ENCODE measurements at regions of chr1 and their contacts with region 1.

Region 1: GRCh38 chr1:156480411-156481192 is 20.0 kb downstream of the MEF2D start:
- DNase-seq: peak; percentile 58 to 87 (median 76)
- ATAC-seq: peak; percentile 80 to 87 (median 85)
- H3K4me3 ChIP-seq: no peak overlapping the region
- H3K4me3 Mint-ChIP-seq: peak overlapping the region in 1 of 3 donors; percentile 45
- H3K27ac ChIP-seq: peak overlapping the region; percentile 39
- H3K27ac Mint-ChIP-seq: peak overlapping the region; percentile 64 to 77
- H3K4me1 ChIP-seq: peaks cover 2 to 54% of the 10 kb centered on the region in 2 experiments
- H3K4me1 Mint-ChIP-seq: peaks cover 45 to 52% (median 51%) of the 10 kb centered on the region in 3 donors
- H3K27me3 ChIP-seq: no peaks in the 10 kb centered on the region
- H3K27me3 Mint-ChIP-seq: no peaks in the 10 kb centered on the region

Region 2: GRCh38 chr1:156025877-156026276 is 454.7 kb before region 1 on chr1:
- CTCF ChIA-PET with region 1: no interaction called
- POLR2A ChIA-PET with region 1: no interaction called
- DNase-seq: peak in 25 of 35 experiments; percentile 1 to 56 (median 21)
- ATAC-seq: peak; percentile 64 to 79 (median 76)
- H3K4me3 ChIP-seq: no peak overlapping the region
- H3K4me3 Mint-ChIP-seq: no peak overlapping the region
- H3K27ac ChIP-seq: no peak overlapping the region
- H3K27ac Mint-ChIP-seq: peak overlapping the region in 1 of 2 donors; percentile 10
- H3K4me1 ChIP-seq: peaks cover 2 to 8% of the 10 kb centered on the region in 2 experiments
- H3K4me1 Mint-ChIP-seq: peaks cover 5 to 18% (median 8%) of the 10 kb centered on the region in 3 donors
- H3K27me3 ChIP-seq: peaks cover 0 to 5% of the 10 kb centered on the region in 2 experiments
- H3K27me3 Mint-ChIP-seq: peaks cover 0 to 5% of the 10 kb centered on the region in 2 donors

Region 3: DNA sequence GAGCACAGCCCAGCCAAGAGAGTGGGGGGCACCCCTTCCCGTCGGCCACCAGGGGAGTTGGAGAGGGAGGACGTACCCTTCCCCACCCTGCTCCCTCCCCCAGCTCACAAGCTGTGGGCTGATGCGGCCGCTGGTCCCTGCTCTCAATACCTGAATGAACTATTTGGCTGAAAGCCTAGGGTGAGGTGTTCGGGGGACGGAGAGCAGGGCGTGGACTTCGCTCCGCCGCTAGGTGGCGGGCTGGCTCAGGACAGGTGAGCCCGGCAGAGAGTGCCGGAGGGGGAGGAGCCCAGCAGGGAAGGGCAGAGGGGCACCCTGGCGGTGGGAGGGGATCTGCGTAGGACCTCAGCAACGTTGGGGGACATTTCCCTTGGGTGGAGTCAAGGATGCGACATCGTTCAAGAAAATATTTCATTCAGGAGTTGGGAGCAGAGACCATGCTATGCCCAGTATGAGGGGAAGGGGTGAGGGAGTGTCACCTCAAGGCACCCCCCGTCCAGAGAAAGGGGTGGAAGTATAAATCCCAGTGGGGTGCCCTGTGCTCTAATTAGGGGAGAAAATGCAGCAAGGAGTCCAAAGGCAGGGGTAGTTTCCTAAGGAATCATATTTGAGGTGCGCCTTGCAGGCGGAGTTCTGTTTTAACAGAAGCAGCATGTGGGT is 123.6 kb before region 1 on chr1:
- CTCF ChIA-PET with region 1: no interaction called
- POLR2A ChIA-PET with region 1: no interaction called
- DNase-seq: peak; percentile 12 to 76 (median 55)
- ATAC-seq: peak; percentile 93 to 98 (median 98)
- H3K4me3 ChIP-seq: no peak overlapping the region
- H3K4me3 Mint-ChIP-seq: no peak overlapping the region
- H3K27ac ChIP-seq: no peak overlapping the region
- H3K27ac Mint-ChIP-seq: peak overlapping the region in 1 of 2 donors; percentile 39
- H3K4me1 ChIP-seq: peaks cover 0 to 8% of the 10 kb centered on the region in 2 experiments
- H3K4me1 Mint-ChIP-seq: peaks cover 4 to 10% (median 6%) of the 10 kb centered on the region in 3 donors
- H3K27me3 ChIP-seq: peaks cover 0 to 33% of the 10 kb centered on the region in 2 experiments
- H3K27me3 Mint-ChIP-seq: peaks cover 30 to 43% of the 10 kb centered on the region in 2 donors

Region 4: GRCh38 chr1:156500797-156501499 is 20.3 kb after region 1 on chr1:
- CTCF ChIA-PET with region 1: interaction called, 14 to 51 read pairs
- POLR2A ChIA-PET with region 1: interaction called in 1 of 2 experiments, 14 read pairs
- DNase-seq: peak; percentile 85 to 96 (median 91)
- ATAC-seq: peak; percentile 71 to 80 (median 74)
- H3K4me3 ChIP-seq: peak overlapping the region; percentile 87 to 91
- H3K4me3 Mint-ChIP-seq: peak overlapping the region; percentile 82 to 92 (median 90)
- H3K27ac ChIP-seq: peak overlapping the region; percentile 97
- H3K27ac Mint-ChIP-seq: peak overlapping the region; percentile 97 to 99
- H3K4me1 ChIP-seq: peaks cover 54 to 84% of the 10 kb centered on the region in 2 experiments
- H3K4me1 Mint-ChIP-seq: peaks cover 67 to 79% (median 76%) of the 10 kb centered on the region in 3 donors
- H3K27me3 ChIP-seq: no peaks in the 10 kb centered on the region
- H3K27me3 Mint-ChIP-seq: no peaks in the 10 kb centered on the region

Region 5: GRCh38 chr1:156532374-156532773 is 51.8 kb after region 1 on chr1:
- CTCF ChIA-PET with region 1: interaction called, 3 to 4 read pairs
- POLR2A ChIA-PET with region 1: interaction called in 1 of 2 experiments, 10 read pairs
- DNase-seq: no peak
- ATAC-seq: no peak
- H3K4me3 ChIP-seq: no peak overlapping the region
- H3K4me3 Mint-ChIP-seq: no peak overlapping the region
- H3K27ac ChIP-seq: no peak overlapping the region
- H3K27ac Mint-ChIP-seq: no peak overlapping the region
- H3K4me1 ChIP-seq: peaks cover 0 to 11% of the 10 kb centered on the region in 2 experiments
- H3K4me1 Mint-ChIP-seq: peaks cover 8 to 14% (median 10%) of the 10 kb centered on the region in 3 donors
- H3K27me3 ChIP-seq: peaks cover 0 to 5% of the 10 kb centered on the region in 2 experiments
- H3K27me3 Mint-ChIP-seq: no peaks in the 10 kb centered on the region

Region 6: GRCh38 chr1:156601122-156601830 is 120.7 kb after region 1 on chr1 and contains the start of gene GPATCH4:
- CTCF ChIA-PET with region 1: interaction called, 3 to 5 read pairs
- POLR2A ChIA-PET with region 1: interaction called, 4 to 13 read pairs
- DNase-seq: peak; percentile 43 to 82 (median 60)
- ATAC-seq: peak; percentile 86 to 90 (median 88)
- H3K4me3 ChIP-seq: peak within 1 kb of the TSS; percentile 96 to 99
- H3K4me3 Mint-ChIP-seq: peak within 1 kb of the TSS; percentile 79 to 100 (median 99)
- H3K27ac ChIP-seq: peak within 1 kb of the TSS; percentile 77
- H3K27ac Mint-ChIP-seq: peak within 1 kb of the TSS; percentile 93 to 97
- H3K4me1 ChIP-seq: peaks cover 12 to 33% of the 10 kb centered on the region in 2 experiments
- H3K4me1 Mint-ChIP-seq: peaks cover 26 to 35% (median 35%) of the 10 kb centered on the region in 3 donors
- H3K27me3 ChIP-seq: no peaks in the 10 kb centered on the region
- H3K27me3 Mint-ChIP-seq: no peaks in the 10 kb centered on the region
- total RNA-seq, gene GPATCH4: 34.3 to 41.6 (median 40.6) TPM